Activated naive CD4-positive, alpha-beta T cell treated with anti-CD3 and anti-CD28 coated beads for 36 hours (primary cell): ENCODE measurements at regions of chr5 and their contacts with region 1.

Region 1: GRCh38 chr5:175796536-175797499 is 74.6 kb upstream of the CPLX2 start:
- DNase-seq: peak; percentile 90
- H3K4me3 Mint-ChIP-seq: no peak overlapping the region
- H3K27ac Mint-ChIP-seq: no peak overlapping the region
- H3K4me1 Mint-ChIP-seq: peaks cover 8% of the 10 kb centered on the region
- H3K27me3 Mint-ChIP-seq: peaks cover 64% of the 10 kb centered on the region

Region 2: GRCh38 chr5:175821790-175822211 is 25.0 kb after region 1 on chr5:
- CTCF ChIA-PET with region 1: no interaction called
- intact Hi-C with region 1: loop called (anchors 1 kb)
- DNase-seq: peak; percentile 35
- H3K4me3 Mint-ChIP-seq: peak overlapping the region; percentile 5
- H3K27ac Mint-ChIP-seq: peak overlapping the region; percentile 74
- H3K4me1 Mint-ChIP-seq: peaks cover 11% of the 10 kb centered on the region
- H3K27me3 Mint-ChIP-seq: peaks cover 12% of the 10 kb centered on the region

Region 3: DNA sequence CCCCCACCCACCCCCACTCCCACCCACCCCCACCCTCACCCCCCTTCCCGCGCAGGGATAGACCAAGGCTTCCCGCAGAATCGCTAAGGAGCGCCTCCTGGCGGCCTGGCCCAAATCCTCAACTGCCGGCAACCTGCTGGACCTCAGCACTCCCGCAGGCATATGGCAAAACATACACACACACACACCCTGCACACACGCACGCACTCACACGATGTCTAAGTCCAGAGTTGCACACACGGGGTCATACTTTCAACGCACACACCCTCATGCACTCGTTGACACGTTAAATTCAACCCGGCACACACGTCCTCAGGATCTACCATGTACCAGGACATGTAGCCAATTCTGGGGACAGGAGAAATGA is 76.3 kb after region 1 on chr5:
- CTCF ChIA-PET with region 1: interaction called, 4 read pairs
- intact Hi-C with region 1: loop called (anchors 1 kb)
- DNase-seq: peak; percentile 38
- H3K4me3 Mint-ChIP-seq: no peak overlapping the region
- H3K27ac Mint-ChIP-seq: no peak overlapping the region
- H3K4me1 Mint-ChIP-seq: peaks cover 8% of the 10 kb centered on the region
- H3K27me3 Mint-ChIP-seq: peaks cover 48% of the 10 kb centered on the region